H1 (cell line): ENCODE measurements at regions of chr18 and their contacts with region 1.

Region 1: GRCh38 chr18:32158108-32158624 is 31.7 kb upstream of the MEP1B start:
- DNase-seq: peak; percentile 76
- H3K4me3 ChIP-seq: peak overlapping the region in 2 of 4 experiments; percentile 5 to 39; a peak in 2 of 8 replicates
- H3K27ac ChIP-seq: no peak overlapping the region
- H3K4me1 ChIP-seq: no peaks in the 10 kb centered on the region
- H3K27me3 ChIP-seq: no peaks in the 10 kb centered on the region
- CTCF ChIP-seq: peak; percentile 74 to 96 (median 93)
- EP300 ChIP-seq: no peak
- POLR2A ChIP-seq: no peak
- RAD21 ChIP-seq: peak; percentile 99

Region 2: DNA sequence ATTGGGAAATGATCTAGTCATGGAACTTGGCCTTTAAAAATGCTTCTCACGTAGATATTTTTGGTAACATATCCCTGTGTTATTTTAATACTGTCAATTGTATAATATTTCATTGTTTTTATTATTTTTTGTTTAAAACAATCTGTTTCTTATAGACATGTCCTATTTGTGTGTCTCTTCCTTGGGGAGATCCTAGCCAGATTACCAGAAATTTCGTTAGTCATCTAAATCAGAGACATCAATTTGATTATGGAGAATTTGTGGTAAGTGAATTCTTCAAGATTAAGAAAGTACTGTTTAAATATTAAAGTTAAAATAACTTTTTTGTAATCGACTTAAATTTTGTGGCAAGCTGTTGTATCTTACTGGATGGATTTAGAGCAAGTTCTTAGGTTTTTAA is 31.6 kb before region 1 on chr18:
- CTCF ChIA-PET with region 1: no interaction called
- POLR2A ChIA-PET with region 1: no interaction called
- DNase-seq: no peak
- H3K4me3 ChIP-seq: no peak overlapping the region
- H3K27ac ChIP-seq: no peak overlapping the region
- H3K4me1 ChIP-seq: no peaks in the 10 kb centered on the region
- H3K27me3 ChIP-seq: no peaks in the 10 kb centered on the region
- CTCF ChIP-seq: no peak
- EP300 ChIP-seq: no peak
- POLR2A ChIP-seq: no peak
- RAD21 ChIP-seq: no peak

Region 3: DNA sequence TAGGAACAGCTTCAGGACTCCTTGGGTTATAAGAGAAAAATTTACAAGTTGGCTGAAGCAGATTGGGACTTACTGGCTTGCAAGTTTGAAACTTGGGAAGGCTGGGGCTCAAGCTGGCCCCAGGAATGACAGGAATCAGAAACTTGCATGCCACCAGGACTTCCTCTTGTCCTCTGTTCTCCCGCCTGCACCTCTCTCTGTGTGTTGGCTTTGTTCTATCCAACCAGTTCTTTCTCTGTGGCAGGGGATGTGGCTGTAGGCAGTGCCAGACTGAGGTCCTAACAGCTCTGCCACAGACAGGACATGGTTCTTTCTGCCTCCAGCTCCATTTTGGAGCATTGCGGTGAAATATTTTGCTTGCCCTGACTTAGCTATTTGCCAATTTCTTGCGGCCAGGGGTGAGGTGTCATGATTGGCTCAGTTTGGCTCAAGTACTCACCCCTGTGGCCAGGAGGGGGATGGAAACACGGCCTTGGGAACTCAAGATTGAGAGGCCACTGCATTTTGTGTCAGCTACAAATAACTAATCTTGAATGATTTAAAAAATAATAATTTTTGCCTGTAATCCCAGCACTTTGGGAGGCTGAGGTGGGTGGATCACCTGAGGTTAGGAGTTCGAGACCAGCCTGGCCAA is 80.6 kb after region 1 on chr18:
- CTCF ChIA-PET with region 1: interaction called, 12 read pairs
- POLR2A ChIA-PET with region 1: no interaction called
- DNase-seq: no peak
- H3K4me3 ChIP-seq: no peak overlapping the region
- H3K27ac ChIP-seq: no peak overlapping the region
- H3K4me1 ChIP-seq: peaks cover 2 to 12% (median 4%) of the 10 kb centered on the region in 4 experiments; a peak in 3 of 7 replicates
- H3K27me3 ChIP-seq: no peaks in the 10 kb centered on the region
- CTCF ChIP-seq: peak; percentile 10 to 50 (median 43); a peak in 3 of 4 replicates
- EP300 ChIP-seq: no peak
- POLR2A ChIP-seq: no peak
- RAD21 ChIP-seq: peak; percentile 21 to 51; a peak in 3 of 4 replicates

Region 4: DNA sequence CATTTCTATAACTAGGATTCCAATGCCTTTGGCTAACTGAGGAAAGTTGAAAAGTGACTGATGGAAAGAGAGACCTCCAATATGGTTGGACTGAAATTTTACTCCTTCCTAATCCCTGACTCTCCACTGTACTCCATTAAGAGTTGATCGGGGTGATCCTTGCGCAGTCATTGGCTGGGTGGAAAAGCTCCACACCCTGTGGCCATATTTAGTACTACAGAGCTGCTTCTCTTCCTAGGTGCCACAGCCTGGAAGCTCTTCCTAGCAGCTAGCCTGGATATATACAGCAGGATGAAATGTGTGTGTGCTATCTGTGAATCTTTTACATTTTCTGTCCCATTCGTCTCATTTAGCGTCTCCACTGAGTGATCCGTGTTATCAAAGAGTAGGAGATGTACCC is 102.8 kb after region 1 on chr18:
- CTCF ChIA-PET with region 1: interaction called, 10 read pairs
- POLR2A ChIA-PET with region 1: no interaction called
- DNase-seq: no peak
- H3K4me3 ChIP-seq: no peak overlapping the region
- H3K27ac ChIP-seq: no peak overlapping the region
- H3K4me1 ChIP-seq: no peaks in the 10 kb centered on the region
- H3K27me3 ChIP-seq: no peaks in the 10 kb centered on the region; a peak in 1 of 7 replicates
- CTCF ChIP-seq: peak in 1 of 3 experiments; percentile 46; a peak in 1 of 4 replicates
- EP300 ChIP-seq: no peak
- POLR2A ChIP-seq: no peak
- RAD21 ChIP-seq: peak in 1 of 2 experiments; percentile 21; a peak in 1 of 4 replicates

Region 5: DNA sequence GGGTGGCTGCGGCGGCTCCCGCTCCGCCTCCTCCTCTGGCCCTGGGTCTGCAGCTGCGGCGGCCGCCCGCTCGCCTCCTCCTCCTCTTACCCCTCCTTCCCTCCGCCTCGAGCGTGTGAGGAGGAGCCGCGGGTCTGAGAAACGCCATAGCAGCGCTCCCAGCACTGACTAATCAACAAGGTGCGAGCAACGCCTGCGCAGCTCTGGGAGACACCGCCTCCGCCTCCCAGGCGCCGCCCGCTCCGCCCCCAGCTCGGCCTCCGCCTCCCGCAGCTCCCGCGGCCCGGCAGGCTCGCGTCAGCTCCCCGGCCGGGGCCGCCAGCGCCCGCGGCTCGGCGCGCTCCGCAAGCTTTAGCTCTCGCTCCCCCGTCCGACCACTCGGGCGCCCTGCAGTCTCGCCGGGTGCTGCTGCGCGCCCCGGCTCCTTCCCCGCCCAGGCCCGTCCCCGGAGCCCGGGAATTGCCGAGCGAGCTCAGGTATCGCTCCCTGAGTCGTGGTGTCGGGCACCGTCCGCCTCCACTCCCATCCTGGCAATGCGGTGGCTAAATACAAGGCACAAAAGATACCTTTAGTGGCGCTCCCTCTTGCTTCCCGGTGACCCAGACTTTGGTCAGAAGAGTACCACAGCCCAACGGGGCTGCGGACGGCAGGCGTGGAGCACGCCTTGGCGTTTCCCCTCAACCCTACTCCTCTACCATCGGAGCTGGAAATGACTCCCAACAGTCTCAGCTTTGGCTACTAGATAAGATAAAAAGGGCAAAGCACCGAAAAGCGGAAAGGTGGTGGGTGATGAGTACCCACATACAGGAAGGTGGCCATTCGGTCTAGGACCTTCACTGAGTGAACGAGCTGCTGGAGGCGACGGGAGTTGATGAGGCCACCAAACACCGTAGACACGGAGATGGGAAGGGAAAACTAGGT is 312.8 kb after region 1 on chr18 and contains the start of gene GAREM1:
- CTCF ChIA-PET with region 1: interaction called, 16 read pairs
- POLR2A ChIA-PET with region 1: no interaction called
- DNase-seq: peak; percentile 83 to 91
- H3K4me3 ChIP-seq: peak within 1 kb of the TSS; percentile 87 to 98 (median 90)
- H3K27ac ChIP-seq: peak within 1 kb of the TSS; percentile 70; the same call in 1 of the 2 replicates
- H3K4me1 ChIP-seq: peaks cover 3 to 12% (median 6%) of the 10 kb centered on the region in 4 experiments
- H3K27me3 ChIP-seq: peaks cover 0 to 14% (median 9%) of the 10 kb centered on the region in 4 experiments; a peak in 4 of 7 replicates
- CTCF ChIP-seq: peak; percentile 50 to 60 (median 55)
- EP300 ChIP-seq: no peak
- POLR2A ChIP-seq: peak; percentile 72 to 88
- RAD21 ChIP-seq: peak; percentile 48 to 71
- total RNA-seq, gene GAREM1: 9.2 and 9.6 TPM in 2 replicates